Posterior vena cava (tissue), 2 donors: ENCODE measurements at regions of chr17 and their contacts with region 1.

Region 1: DNA sequence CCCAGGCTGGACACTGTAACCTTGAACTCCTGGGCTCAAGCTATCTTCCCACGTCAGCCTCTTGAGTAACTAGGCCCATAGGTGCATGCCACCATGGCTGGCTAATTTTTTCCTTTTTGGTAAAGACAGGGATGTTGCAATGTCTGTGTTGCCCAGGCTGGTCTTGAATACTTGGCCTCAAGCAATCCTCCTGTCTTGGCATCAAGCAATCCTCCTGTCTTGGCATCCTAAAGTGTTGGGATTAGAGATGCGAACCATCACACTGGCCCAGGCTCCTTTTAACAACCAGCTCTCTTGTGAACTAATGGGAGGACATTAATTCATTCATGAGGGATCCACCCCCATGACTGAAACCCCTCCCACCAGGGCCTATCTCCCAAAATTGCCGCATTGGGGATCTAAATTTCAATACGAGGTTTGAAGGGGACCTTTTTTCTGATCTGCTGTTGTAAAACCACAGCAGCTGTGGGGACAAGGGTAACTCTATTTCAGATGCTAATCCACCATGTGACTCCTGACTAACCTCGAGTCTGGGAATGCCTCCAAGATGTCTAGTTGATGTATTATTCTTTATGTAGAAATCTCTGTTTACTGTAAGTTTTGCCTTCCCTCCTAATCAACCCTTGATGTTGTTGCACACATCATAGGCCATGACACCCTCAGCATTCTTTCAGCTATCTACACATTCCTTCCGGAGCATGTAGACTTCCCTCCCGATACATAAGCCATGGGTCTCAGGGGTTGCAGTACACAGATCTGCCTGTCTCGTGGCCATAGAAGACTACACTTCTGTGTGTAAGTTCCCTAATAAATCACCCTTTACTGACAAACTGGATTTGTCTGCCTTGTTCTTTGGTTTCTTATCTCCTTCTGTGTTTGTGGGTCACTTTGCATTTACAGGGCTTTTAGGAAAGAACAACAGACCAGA is 37.6 kb downstream of the RNF112 start:
- DNase-seq: no peak

Region 2: GRCh38 chr17:19271780-19272357 is 176.7 kb before region 1 on chr17:
- intact Hi-C with region 1: loop called in 1 of 2 experiments (anchors 2 kb)
- DNase-seq: no peak

Region 3: GRCh38 chr17:19327039-19327776 is 121.4 kb before region 1 on chr17:
- intact Hi-C with region 1: no loop called
- DNase-seq: peak; percentile 19

Region 4: GRCh38 chr17:19362277-19363113 is 86.1 kb before region 1 on chr17 and contains the start of gene B9D1:
- intact Hi-C with region 1: loop called (anchors 2 to 5 kb)
- DNase-seq: peak; percentile 98
- total RNA-seq, gene B9D1: 7.7 to 9.8 TPM